ENCODE measurements at regions of chr6 and their contacts with region 1.

Region 1: DNA sequence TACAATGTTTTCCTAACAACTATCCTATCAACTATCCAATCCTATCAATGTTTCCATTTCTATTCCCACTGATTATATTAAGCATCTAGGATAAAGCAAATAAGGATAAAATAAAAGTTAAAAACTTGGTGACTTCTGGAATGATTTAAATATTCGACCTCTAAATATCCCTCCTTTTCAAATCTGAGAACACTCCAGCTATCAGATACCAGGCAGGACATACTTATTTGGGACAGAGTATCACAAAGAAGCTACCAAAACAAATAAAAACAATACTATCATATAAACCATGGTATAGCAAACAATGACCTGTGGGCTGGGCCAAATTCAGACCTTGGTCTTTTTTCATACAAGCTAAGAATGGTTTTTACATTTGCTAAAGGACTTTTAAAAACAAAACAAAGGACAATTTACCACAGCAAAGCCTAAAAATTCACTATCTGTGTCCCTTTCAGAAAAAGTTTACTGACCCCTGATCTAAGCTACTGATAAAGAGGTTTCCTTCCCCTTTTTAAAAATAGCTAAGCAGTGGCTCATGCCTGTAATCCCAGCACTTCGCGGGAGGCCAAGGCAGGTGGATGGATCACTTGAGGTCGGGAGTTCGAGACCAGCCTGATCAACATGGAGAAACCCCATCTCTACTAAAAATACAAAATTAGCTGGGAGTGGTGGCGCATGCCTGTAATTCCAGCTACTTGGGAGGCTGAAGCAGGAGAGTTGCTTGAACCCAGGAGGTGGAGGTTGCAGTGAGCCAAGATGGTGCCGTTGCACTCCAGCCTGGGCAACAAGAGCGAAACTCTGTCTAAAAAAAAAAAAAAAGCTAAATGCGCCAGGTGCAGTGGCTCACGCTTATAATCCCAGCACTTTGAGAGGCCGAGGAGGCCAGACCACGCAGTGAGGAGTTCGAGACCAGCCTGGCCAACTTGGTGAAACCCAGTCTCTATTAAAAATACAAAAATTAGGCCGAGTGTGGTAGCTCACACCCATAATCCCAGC is 6.0 kb downstream of the NUP153 start:
- DNase-seq: no peak
- H3K4me3 Mint-ChIP-seq: no peak overlapping the region
- H3K27ac Mint-ChIP-seq: peak overlapping the region; percentile 95
- H3K4me1 Mint-ChIP-seq: peaks cover 56% of the 10 kb centered on the region
- H3K27me3 Mint-ChIP-seq: no peaks in the 10 kb centered on the region

Region 2: GRCh38 chr6:17688481-17688880 is 12.2 kb before region 1 on chr6:
- CTCF ChIA-PET with region 1: interaction called, 19 read pairs
- POLR2A ChIA-PET with region 1: no interaction called
- DNase-seq: no peak
- H3K4me3 Mint-ChIP-seq: no peak overlapping the region
- H3K27ac Mint-ChIP-seq: no peak overlapping the region
- H3K4me1 Mint-ChIP-seq: peaks cover 39% of the 10 kb centered on the region
- H3K27me3 Mint-ChIP-seq: no peaks in the 10 kb centered on the region

Region 3: DNA sequence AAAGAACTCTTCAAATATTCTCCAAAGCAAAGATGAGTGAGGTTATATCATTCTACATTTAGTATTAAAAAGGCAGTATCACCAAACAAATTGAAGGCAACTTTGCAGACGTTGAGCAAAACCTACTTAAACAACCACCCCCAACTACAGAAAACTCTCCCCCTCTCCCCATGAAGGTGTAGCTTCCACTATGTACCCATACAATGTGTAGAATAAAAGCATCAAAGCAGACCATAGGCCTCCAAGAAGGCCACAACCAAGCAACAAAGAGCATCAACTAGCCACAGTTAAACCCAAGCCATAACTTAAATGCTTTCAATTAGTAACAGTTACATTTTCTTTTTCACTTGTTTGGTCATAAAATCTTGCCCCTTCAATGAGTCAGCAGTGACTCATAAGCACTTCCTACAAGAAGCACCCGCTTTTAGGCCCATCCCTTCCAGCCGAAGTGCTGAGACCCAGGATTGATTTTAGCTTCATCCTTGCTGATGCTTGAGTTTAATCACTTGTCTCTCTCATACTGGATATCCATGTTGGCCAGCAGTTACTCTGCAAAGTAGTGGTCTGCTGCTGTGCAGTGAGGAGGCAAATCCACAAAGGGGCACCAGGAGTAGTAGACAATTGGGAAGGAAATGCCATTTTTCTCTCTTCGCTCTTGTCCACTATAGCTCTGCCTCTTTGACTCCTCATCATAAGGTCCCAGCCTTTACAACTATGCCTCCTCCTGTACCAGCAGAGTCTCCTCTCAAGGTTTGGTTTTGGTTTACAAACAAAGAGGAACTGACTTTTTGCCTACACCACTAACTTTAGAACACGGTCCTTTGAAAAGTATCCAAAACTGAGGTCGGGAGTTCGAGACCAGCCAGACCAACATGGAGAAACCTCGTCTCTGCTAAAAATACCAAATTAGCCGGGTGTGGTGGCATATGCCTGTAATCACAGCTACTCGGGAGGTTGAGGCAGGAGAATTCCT is 14.4 kb after region 1 on chr6:
- CTCF ChIA-PET with region 1: interaction called, 21 read pairs
- POLR2A ChIA-PET with region 1: interaction called, 5 read pairs
- DNase-seq: peak; percentile 29
- H3K4me3 Mint-ChIP-seq: peak overlapping the region; percentile 11
- H3K27ac Mint-ChIP-seq: peak overlapping the region; percentile 82
- H3K4me1 Mint-ChIP-seq: peaks cover 23% of the 10 kb centered on the region
- H3K27me3 Mint-ChIP-seq: peaks cover 3% of the 10 kb centered on the region